Heart left ventricle (tissue), 16 donors: ENCODE measurements at regions of chr19 and their contacts with region 1.

Region 1: DNA sequence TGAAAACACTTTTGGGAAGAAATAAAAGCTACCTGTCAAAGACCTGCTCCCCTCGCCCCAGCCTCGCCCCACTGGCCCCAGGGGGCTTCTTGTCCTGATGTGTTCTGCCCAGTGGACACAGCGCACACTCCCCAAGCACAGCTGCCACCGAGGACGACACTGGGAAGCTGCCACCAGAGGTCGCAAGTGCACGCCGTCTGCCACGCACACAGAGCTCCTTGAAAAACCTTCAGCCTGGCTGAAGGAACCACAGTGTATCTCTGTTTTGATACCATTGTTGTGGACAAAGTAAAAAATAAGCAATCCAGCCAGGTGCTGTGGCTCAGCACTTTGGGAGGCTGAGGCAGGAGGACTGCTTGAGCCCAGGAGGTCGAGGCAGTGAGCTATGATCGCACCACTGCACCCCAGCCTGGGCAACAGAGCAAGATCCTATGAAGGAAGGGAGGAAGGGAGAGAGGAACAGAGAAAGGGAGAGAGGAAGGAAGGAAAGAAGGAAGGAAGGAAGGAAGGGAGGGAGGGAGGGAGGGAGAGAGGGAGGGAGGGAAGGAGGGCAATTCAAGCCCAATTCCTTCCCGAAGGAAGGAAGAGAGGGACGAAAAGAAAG is 57.3 kb downstream of the CEBPG start:
- DNase-seq: peak; percentile 54 to 82 (median 67)
- ATAC-seq: peak in 3 of 4 donors; percentile 73 to 84 (median 78)
- H3K4me3 ChIP-seq: no peak overlapping the region
- H3K27ac ChIP-seq: no peak overlapping the region
- H3K4me1 ChIP-seq: no peaks in the 10 kb centered on the region
- H3K27me3 ChIP-seq: no peaks in the 10 kb centered on the region
- CTCF ChIP-seq: peak; percentile 60 to 84 (median 74)
- POLR2A ChIP-seq: no peak

Region 2: GRCh38 chr19:33416307-33417215 is 14.2 kb before region 1 on chr19:
- intact Hi-C with region 1: no loop called
- DNase-seq: peak in 3 of 5 donors; percentile 54 to 72 (median 70)
- ATAC-seq: peak in 3 of 4 donors; percentile 41 to 59 (median 49)
- H3K4me3 ChIP-seq: peak overlapping the region in 2 of 12 donors; percentile 21 to 29
- H3K27ac ChIP-seq: no peak overlapping the region
- H3K4me1 ChIP-seq: peaks cover 0 to 9% (median 0%) of the 10 kb centered on the region in 12 donors
- H3K27me3 ChIP-seq: no peaks in the 10 kb centered on the region
- CTCF ChIP-seq: peak; percentile 43 to 69 (median 60)
- POLR2A ChIP-seq: no peak

Region 3: DNA sequence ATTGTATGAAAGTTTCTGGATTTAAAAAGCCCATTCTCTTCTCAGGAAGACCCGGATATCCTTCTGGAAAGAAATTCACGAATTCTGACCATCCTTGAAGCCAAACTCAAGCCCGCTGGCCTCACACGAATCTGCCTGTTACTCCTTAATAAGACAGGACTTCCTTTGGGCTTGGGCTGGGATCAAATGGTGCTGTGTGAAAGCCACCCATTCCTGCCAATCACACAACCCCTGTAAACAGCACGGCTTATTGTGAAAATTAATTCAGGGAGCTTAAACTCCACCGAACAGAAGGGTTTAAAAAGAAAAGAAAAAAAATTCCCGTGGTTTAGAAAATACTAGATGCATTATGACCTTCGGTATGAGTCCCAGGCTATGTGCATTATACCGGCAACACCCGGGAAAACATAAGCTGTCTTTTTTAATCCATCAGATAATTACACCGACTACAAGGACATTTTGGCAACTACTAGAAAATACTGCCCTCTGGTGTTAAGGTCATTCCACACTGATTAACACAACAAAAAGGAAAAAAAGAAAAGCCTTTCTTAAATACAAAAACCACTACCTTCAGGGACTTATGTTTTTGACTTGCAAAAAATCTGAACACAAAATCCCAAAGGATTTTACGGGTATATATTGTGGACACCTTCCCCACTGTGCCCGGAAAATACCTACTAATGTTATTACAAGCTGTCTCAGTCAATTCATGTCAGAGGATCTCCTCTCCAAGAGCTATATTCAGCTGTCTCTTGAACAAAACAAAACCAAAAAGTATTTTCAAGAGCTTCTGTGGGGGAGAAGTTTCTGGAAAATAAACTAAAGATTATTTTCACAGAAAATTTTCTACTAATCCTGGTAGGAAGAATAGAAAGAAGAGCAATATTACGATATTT is 665.5 kb after region 1 on chr19:
- intact Hi-C with region 1: loop called in 1 of 10 experiments (anchors 10 kb)
- DNase-seq: no peak
- ATAC-seq: peak in 1 of 4 donors; percentile 58
- H3K4me3 ChIP-seq: no peak overlapping the region
- H3K27ac ChIP-seq: no peak overlapping the region
- H3K4me1 ChIP-seq: peaks cover 0 to 7% (median 0%) of the 10 kb centered on the region in 12 donors
- H3K27me3 ChIP-seq: peaks cover 0 to 12% (median 0%) of the 10 kb centered on the region in 9 donors
- CTCF ChIP-seq: peak; percentile 49 to 75 (median 62)
- POLR2A ChIP-seq: no peak